Transverse colon (tissue), 4 donors: ENCODE measurements at regions of chr19 and their contacts with region 1.

Region 1: GRCh38 chr19:8158411-8159074 is 9.2 kb upstream of the FBN3 start:
- DNase-seq: peak; percentile 23
- H3K4me3 ChIP-seq: no peak overlapping the region
- H3K27ac ChIP-seq: no peak overlapping the region
- H3K4me1 ChIP-seq: peaks cover 7 to 11% (median 9%) of the 10 kb centered on the region in 4 donors
- H3K27me3 ChIP-seq: no peaks in the 10 kb centered on the region
- CTCF ChIP-seq: peak; percentile 47 to 63 (median 52)
- EP300 ChIP-seq: no peak
- POLR2A ChIP-seq: no peak

Region 2: DNA sequence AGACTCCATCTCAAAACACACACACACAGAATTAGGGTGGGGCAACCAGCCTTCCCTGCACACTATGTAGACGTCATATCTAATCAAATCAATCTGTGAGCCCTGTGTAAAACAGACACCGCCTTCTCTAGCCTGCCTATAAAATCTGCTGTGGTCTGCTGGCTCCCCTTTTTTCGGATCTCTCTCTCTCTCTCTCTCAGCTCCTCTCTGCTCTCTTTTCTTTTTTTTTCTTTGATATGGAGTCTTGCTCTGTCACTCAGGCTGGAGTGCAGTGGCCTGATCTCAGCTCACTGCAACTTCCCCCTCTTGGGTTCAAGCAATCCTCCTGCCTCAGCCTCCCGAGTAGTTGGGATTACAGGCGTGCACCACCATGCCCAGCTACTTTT is 1555.8 kb before region 1 on chr19:
- in situ Hi-C with region 1: no loop called
- intact Hi-C with region 1: no loop called
- DNase-seq: no peak
- H3K4me3 ChIP-seq: no peak overlapping the region
- H3K27ac ChIP-seq: no peak overlapping the region
- H3K4me1 ChIP-seq: no peaks in the 10 kb centered on the region
- H3K27me3 ChIP-seq: no peaks in the 10 kb centered on the region
- CTCF ChIP-seq: no peak
- EP300 ChIP-seq: no peak
- POLR2A ChIP-seq: no peak

Region 3: DNA sequence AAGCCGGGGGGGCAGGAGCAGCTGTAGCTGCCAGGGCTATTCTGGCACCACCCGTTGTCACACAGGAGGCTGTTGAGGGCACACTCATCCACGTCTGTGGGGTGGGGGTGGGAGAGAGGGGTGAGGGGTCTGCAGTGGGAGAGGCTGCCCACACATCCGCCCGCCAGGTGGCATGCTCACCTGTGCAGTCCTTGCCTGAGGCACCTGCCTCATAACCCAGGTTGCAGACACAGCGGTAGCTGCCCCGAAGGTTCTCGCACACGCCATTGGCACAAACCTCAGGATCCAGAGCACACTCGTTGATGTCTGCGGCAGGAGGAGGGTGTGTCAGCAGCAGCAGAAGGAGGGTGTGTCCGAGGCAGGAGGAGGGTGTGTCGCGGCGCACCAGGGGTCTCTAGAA is 29.5 kb before region 1 on chr19:
- in situ Hi-C with region 1: no loop called
- intact Hi-C with region 1: no loop called
- DNase-seq: no peak
- H3K4me3 ChIP-seq: no peak overlapping the region
- H3K27ac ChIP-seq: no peak overlapping the region
- H3K4me1 ChIP-seq: no peaks in the 10 kb centered on the region
- H3K27me3 ChIP-seq: no peaks in the 10 kb centered on the region
- CTCF ChIP-seq: no peak
- EP300 ChIP-seq: no peak
- POLR2A ChIP-seq: no peak

Region 4: GRCh38 chr19:8245869-8246835 is 87.6 kb after region 1 on chr19:
- in situ Hi-C with region 1: loop called in 2 of 4 experiments (anchors 5 kb)
- intact Hi-C with region 1: loop called (anchors 5 kb)
- DNase-seq: no peak
- H3K4me3 ChIP-seq: no peak overlapping the region
- H3K27ac ChIP-seq: no peak overlapping the region
- H3K4me1 ChIP-seq: peaks cover 0 to 3% (median 1%) of the 10 kb centered on the region in 4 donors
- H3K27me3 ChIP-seq: no peaks in the 10 kb centered on the region
- CTCF ChIP-seq: no peak
- EP300 ChIP-seq: no peak
- POLR2A ChIP-seq: no peak